ENCODE measurements at regions of chr5 and their contacts with region 1.

Region 1: GRCh38 chr5:159430361-159431012 is 100.2 kb upstream of the IL12B start:
- DNase-seq: no peak
- ATAC-seq: no peak
- H3K4me3 ChIP-seq: no peak overlapping the region
- H3K27ac ChIP-seq: no peak overlapping the region
- H3K4me1 ChIP-seq: peaks cover 0 to 4% (median 0%) of the 10 kb centered on the region in 12 donors
- H3K27me3 ChIP-seq: no peaks in the 10 kb centered on the region
- CTCF ChIP-seq: no peak
- POLR2A ChIP-seq: no peak

Region 2: GRCh38 chr5:159286420-159287035 is 144.0 kb before region 1 on chr5:
- intact Hi-C with region 1: loop called in 1 of 10 experiments (anchors 10 kb)
- DNase-seq: no peak
- ATAC-seq: peak in 2 of 4 donors; percentile 54 to 55
- H3K4me3 ChIP-seq: no peak overlapping the region
- H3K27ac ChIP-seq: no peak overlapping the region
- H3K4me1 ChIP-seq: peaks cover 0 to 6% (median 0%) of the 10 kb centered on the region in 12 donors
- H3K27me3 ChIP-seq: no peaks in the 10 kb centered on the region
- CTCF ChIP-seq: peak; percentile 13 to 63 (median 43)
- POLR2A ChIP-seq: no peak